Right ventricle myocardium superior (tissue), 1 donor: ENCODE measurements at regions of chr15 and their contacts with region 1.

Region 1: GRCh38 chr15:70815644-70816043 is 38.3 kb downstream of the LARP6 start:
- DNase-seq: no peak
- ATAC-seq: no peak

Region 2: GRCh38 chr15:70569091-70569621 is 246.5 kb before region 1 on chr15:
- intact Hi-C with region 1: loop called (anchors 10 kb)
- DNase-seq: no peak
- ATAC-seq: peak; percentile 92

Region 3: GRCh38 chr15:70713714-70714414 is 101.8 kb before region 1 on chr15:
- intact Hi-C with region 1: no loop called
- DNase-seq: no peak
- ATAC-seq: peak; percentile 21